Mammary epithelial cell (primary cell): ENCODE measurements at regions of chr17 and their contacts with region 1.

Region 1: GRCh38 chr17:37609170-37610040 is at the start of gene SYNRG:
- DNase-seq: peak; percentile 95
- H3K4me3 ChIP-seq: peak within 1 kb of the TSS; percentile 82 to 99 (median 89)
- H3K27ac ChIP-seq: peak within 1 kb of the TSS; percentile 53
- H3K4me1 ChIP-seq: peaks cover 14% of the 10 kb centered on the region
- H3K27me3 ChIP-seq: no peaks in the 10 kb centered on the region
- CTCF ChIP-seq: peak in 1 of 2 donors; percentile 34
- total RNA-seq, gene SYNRG: 22.6 to 23.0 TPM

Region 2: DNA sequence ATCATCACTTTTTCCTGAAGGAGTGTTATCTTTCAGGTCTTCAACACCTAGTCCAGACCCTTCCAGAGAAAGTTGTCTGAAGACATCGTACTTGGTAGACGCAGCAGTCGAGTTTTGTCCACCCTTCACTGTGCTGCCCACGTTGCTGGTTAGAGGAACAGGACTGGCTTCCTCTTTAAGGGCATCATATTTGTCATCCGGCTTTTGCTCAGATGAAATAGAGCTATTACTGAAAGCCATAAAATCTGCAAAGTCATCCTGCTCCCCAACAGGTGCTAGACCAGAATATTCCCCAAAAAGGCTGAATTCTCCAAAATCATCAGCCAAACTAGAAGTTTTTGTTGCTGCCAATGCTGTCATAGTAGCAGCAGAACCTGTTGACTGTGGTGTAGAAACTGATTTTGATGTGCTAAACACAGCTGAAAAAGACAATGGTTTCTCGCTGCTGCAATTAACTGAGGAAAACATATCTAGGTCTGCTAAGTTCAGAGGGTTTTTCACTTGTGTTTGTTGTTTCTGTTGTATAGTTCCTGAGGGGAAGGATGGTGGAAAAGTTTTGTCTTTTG is 55.9 kb before region 1 on chr17:
- CTCF ChIA-PET with region 1: no interaction called
- dilution Hi-C with region 1: no loop called
- in situ Hi-C with region 1: no loop called
- intact Hi-C with region 1: no loop called
- DNase-seq: no peak
- H3K4me3 ChIP-seq: no peak overlapping the region
- H3K27ac ChIP-seq: no peak overlapping the region
- H3K4me1 ChIP-seq: peaks cover 18% of the 10 kb centered on the region
- H3K27me3 ChIP-seq: no peaks in the 10 kb centered on the region
- CTCF ChIP-seq: no peak

Region 3: DNA sequence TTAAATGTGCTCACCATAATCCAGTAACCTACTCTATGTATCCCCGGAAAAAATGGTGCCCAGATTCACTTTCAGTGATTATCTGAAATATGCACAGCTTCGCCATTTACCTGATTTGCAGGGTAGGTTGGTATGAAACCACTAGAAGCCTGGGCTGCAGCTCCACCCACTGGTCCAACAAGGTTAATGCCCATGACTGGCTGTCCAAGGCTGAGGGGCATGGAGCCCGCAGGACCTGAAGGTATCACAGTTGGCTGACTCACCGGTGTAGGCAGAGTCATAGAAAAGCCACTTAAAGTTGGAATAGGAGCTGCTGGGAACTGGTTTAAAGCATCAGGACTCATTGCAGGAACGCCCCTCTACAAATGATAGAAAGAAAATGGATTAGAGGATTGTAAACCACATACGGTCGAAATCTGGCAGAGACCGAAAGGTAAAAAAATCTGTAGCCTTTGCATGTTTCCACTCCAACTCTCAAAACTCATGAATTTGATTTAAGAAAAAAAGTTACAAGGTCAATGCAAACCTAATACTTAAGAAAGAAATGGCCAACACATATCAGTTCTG is 38.8 kb before region 1 on chr17:
- CTCF ChIA-PET with region 1: no interaction called
- dilution Hi-C with region 1: no loop called
- in situ Hi-C with region 1: no loop called
- intact Hi-C with region 1: loop called (anchors 2 kb)
- DNase-seq: peak; percentile 89
- H3K4me3 ChIP-seq: no peak overlapping the region
- H3K27ac ChIP-seq: no peak overlapping the region
- H3K4me1 ChIP-seq: peaks cover 2% of the 10 kb centered on the region
- H3K27me3 ChIP-seq: no peaks in the 10 kb centered on the region
- CTCF ChIP-seq: peak; percentile 80 to 81